ENCODE measurements at regions of chr12 and their contacts with region 1.

Region 1: DNA sequence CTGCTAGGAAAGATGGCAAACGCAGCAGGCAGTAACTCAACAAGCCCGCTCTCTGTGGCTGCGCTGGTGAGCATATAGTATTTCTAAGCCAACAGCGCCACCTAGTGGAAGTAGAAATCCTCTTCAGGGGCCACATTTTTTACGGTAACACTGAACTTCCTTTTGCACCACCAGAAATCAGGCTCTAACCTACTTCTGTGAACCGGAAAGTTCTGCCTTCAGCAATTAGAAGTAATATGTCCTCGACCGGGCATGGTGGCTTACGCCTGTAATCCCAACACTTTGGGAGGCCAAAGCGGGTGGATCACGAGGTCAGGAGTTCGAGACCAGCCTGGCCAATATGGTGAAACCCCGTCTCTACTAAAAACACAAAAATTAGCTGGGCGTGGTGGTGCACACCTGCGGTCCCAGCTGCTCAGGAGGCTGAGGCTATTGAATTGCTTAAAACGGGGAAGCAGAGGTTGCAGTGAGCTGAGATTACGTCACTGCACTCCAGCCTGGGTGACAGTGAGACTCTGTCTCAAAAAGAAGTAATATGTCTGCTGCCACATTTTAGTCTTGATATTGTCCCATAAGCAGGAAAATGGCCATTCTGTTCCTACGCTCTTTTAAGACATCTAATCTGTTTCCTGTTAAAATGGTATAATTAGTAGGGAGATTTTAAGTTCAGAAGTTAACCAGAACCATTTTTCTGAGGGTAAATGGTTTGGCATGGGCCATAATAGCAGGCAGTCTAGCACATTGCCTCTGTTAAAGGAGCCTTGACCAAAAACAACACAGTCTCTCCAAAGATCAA is 26.8 kb downstream of the APOBEC1 start:
- DNase-seq: peak in 1 of 2 donors; percentile 86
- H3K4me3 ChIP-seq: peak overlapping the region; percentile 40 to 55
- H3K27ac ChIP-seq: no peak overlapping the region
- H3K4me1 ChIP-seq: no peaks in the 10 kb centered on the region
- H3K27me3 ChIP-seq: no peaks in the 10 kb centered on the region
- CTCF ChIP-seq: peak; percentile 69 to 87 (median 81)

Region 2: GRCh38 chr12:6996040-6996441 is 642.9 kb before region 1 on chr12:
- intact Hi-C with region 1: no loop called
- DNase-seq: no peak
- H3K4me3 ChIP-seq: no peak overlapping the region
- H3K27ac ChIP-seq: no peak overlapping the region
- H3K4me1 ChIP-seq: no peaks in the 10 kb centered on the region
- H3K27me3 ChIP-seq: no peaks in the 10 kb centered on the region
- CTCF ChIP-seq: no peak

Region 3: GRCh38 chr12:7142056-7142644 is 496.8 kb before region 1 on chr12:
- intact Hi-C with region 1: loop called (anchors 10 kb)
- DNase-seq: no peak
- H3K4me3 ChIP-seq: no peak overlapping the region
- H3K27ac ChIP-seq: no peak overlapping the region
- H3K4me1 ChIP-seq: no peaks in the 10 kb centered on the region
- H3K27me3 ChIP-seq: no peaks in the 10 kb centered on the region
- CTCF ChIP-seq: peak; percentile 10 to 59 (median 45)

Region 4: GRCh38 chr12:7219599-7220243 is 419.2 kb before region 1 on chr12:
- intact Hi-C with region 1: loop called (anchors 1 kb)
- DNase-seq: peak in 1 of 2 donors; percentile 74
- H3K4me3 ChIP-seq: no peak overlapping the region
- H3K27ac ChIP-seq: no peak overlapping the region
- H3K4me1 ChIP-seq: no peaks in the 10 kb centered on the region
- H3K27me3 ChIP-seq: no peaks in the 10 kb centered on the region
- CTCF ChIP-seq: peak; percentile 65 to 83 (median 70)

Region 5: GRCh38 chr12:7628381-7628961 is 10.5 kb before region 1 on chr12:
- intact Hi-C with region 1: no loop called
- DNase-seq: no peak
- H3K4me3 ChIP-seq: no peak overlapping the region
- H3K27ac ChIP-seq: no peak overlapping the region
- H3K4me1 ChIP-seq: no peaks in the 10 kb centered on the region
- H3K27me3 ChIP-seq: no peaks in the 10 kb centered on the region
- CTCF ChIP-seq: no peak

Measured in ascending aorta (tissue), 2 donors.